ENCODE measurements at regions of chr1 and their contacts with region 1.

Region 1: DNA sequence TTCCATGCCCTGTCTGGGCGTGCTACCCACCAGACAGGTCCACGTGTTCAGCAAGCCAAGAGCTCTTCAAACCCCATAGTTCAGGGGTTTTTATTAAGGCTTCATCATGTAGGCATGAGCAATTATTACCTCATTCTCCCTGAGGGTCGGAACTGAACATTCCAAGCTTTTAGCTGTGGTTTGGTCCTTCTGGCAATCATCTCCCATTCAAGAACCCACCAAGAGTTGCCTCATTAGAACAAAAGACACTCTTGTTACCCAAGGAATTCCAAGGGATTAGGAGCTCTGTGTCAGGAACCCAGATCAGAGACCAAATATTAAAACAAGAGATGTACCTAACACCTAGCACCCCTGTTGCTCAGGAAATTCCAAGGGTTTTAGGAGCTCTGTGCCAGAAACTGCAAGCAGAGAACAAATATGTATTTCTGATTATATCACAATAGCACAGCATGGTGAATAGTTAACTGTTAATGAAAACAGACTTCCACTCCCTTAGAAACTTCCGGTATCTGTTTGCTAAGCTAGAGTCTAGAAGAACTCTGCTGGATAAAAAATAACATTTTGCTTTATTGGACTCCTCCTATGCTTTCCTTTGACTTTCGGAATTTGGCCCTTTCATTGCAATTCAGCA is 201.2 kb upstream of the L1TD1 start:
- DNase-seq: no peak
- ATAC-seq: no peak
- H3K4me3 ChIP-seq: no peak overlapping the region
- H3K27ac ChIP-seq: no peak overlapping the region
- H3K4me1 ChIP-seq: no peaks in the 10 kb centered on the region
- H3K27me3 ChIP-seq: no peaks in the 10 kb centered on the region
- CTCF ChIP-seq: no peak
- EP300 ChIP-seq: no peak
- POLR2A ChIP-seq: no peak
- RAD21 ChIP-seq: no peak

Region 2: DNA sequence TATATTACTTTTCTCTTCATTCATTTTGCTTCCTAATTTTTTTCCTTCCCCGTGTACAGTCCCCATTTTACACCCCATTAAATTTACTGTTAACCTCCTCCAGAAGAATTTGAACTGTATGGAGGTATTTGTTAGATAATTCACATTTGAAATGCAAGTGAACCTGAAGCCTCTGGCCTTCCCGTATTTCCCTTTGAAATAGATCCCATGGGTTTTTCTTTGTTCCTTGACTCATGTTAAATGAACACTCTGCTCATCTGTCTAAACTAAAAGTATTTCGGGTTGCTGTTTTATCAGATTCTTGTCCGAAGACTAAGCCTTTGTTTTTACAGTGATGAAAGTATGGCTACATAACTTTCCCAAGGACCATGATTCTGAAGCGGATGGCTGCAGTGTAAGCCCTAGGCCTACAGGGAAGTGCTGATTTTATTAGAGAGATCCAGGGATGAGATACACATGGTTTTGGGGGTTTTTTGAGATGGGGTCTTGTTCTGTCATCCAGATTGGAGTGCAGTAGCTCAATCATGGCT is 63.3 kb before region 1 on chr1:
- CTCF ChIA-PET with region 1: no interaction called
- POLR2A ChIA-PET with region 1: no interaction called
- RAD21 ChIA-PET with region 1: no interaction called
- SMC1A ChIA-PET with region 1: no interaction called
- in situ Hi-C with region 1: no loop called
- intact Hi-C with region 1: loop called (anchors 10 kb)
- DNase-seq: no peak
- ATAC-seq: no peak
- H3K4me3 ChIP-seq: no peak overlapping the region
- H3K27ac ChIP-seq: no peak overlapping the region
- H3K4me1 ChIP-seq: no peaks in the 10 kb centered on the region
- H3K27me3 ChIP-seq: no peaks in the 10 kb centered on the region
- CTCF ChIP-seq: no peak
- EP300 ChIP-seq: no peak
- POLR2A ChIP-seq: no peak
- RAD21 ChIP-seq: no peak

Measured in GM12878 (cell line).